ENCODE measurements at regions of chr16 and their contacts with region 1.

Region 1: DNA sequence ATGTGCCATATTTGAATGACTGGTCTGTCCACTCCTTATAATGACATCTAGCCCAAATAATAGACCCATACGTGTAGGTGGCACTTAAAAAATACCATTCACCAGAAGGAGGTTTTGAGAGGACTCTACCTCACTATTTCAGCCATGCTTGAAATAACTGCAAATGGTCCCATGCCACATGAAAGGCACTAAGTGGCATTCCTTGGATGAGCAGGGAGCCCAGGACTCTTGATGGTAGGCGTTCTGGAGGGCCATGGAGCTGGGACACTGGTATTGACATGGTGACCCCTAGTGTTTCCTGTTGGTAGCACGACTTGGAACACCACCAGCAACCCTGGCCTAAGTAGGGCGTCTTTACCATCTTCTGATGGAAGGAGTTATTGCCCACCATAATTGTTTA is 148.7 kb upstream of the ZFHX3 start:
- DNase-seq: peak; percentile 63 to 80
- ATAC-seq: peak; percentile 89 to 95 (median 90)
- H3K4me3 ChIP-seq: no peak overlapping the region
- H3K27ac ChIP-seq: no peak overlapping the region
- H3K4me1 ChIP-seq: no peaks in the 10 kb centered on the region
- H3K27me3 ChIP-seq: peaks cover 0 to 2% (median 0%) of the 10 kb centered on the region in 3 donors
- CTCF ChIP-seq: peak; percentile 75

Region 2: GRCh38 chr16:72501739-72502593 is 694.7 kb before region 1 on chr16:
- intact Hi-C with region 1: loop called (anchors 2 to 5 kb)
- DNase-seq: peak; percentile 42 to 57
- ATAC-seq: peak; percentile 49 to 87 (median 75)
- H3K4me3 ChIP-seq: no peak overlapping the region
- H3K27ac ChIP-seq: no peak overlapping the region
- H3K4me1 ChIP-seq: no peaks in the 10 kb centered on the region
- H3K27me3 ChIP-seq: no peaks in the 10 kb centered on the region
- CTCF ChIP-seq: peak; percentile 76

Region 3: DNA sequence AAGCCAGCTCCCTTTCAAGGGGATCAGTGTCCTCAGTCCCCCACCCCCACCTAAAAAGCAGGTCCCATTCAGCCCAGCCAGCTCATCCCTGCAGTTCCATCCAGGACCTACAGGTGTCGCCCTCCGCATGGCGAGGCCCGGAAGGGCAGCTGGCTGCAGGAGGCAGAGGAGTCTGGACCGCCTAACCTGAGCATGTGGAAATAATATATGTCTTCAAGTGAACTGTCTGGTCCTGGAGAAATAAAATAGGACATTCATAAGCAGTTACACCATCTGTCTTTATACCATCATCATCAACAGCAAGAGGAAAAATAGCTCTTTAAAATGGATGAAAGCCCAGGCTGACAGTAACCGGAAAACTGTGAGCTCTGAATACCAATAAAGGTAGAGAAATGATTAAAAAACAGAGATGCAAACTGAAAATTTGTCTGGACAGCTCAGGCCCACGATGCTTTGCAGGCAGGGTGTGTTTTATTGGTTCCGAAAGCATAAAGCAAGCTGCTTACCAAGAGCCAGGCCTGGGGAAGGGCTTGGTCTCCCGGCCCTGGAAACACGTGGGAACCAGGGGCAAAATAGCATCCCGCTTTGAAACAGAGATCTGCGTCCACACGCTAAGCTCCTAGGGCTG is 363.9 kb before region 1 on chr16:
- intact Hi-C with region 1: loop called (anchors 1 to 10 kb)
- DNase-seq: peak; percentile 89 to 93
- ATAC-seq: peak; percentile 90 to 95 (median 93)
- H3K4me3 ChIP-seq: no peak overlapping the region
- H3K27ac ChIP-seq: peak overlapping the region; percentile 47
- H3K4me1 ChIP-seq: peaks cover 9% of the 10 kb centered on the region
- H3K27me3 ChIP-seq: no peaks in the 10 kb centered on the region
- CTCF ChIP-seq: peak; percentile 96

Region 4: DNA sequence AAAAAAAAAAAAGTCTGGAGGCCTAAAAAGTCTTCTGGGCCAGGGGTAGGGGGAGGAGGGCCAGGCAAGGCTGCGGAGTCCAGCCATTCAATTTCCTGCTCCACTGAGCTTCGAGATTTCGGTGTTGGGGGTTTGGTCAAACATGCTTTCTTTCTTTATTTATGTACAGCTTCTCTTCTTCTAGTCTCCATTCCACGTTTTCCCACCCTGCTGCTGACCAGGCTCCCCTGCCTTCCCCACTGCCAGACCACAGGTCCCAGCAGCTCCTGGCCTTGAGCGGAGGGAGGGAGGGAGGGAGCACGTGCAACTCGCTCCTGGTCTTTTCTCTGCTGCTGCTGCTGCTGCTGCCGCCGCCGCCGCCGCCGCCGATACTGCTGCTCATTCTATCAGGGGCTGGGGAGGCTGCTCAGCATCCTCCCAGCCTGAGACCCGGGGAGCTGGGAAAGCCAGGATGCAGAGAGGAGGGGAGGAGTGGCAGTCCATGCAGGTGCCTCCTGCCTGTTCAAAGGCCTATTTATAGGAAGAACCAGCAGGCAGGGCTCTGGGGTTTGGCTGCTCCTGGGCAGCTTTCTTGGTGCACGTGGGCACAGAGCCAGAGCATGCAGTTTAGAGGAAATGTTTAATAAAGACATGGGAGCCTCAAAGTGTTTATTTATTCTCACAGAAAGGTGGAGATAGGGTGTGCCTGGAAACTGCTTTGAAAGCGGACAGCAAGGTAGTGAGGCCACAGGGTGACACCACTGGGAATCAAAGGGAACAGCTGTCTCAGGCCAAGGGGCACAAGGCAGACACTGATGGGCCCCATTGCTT is 125.3 kb before region 1 on chr16:
- intact Hi-C with region 1: loop called (anchors 5 kb)
- DNase-seq: peak; percentile 52 to 67
- ATAC-seq: peak in 3 of 4 donors; percentile 10 to 33 (median 18)
- H3K4me3 ChIP-seq: peak overlapping the region; percentile 51
- H3K27ac ChIP-seq: peak overlapping the region; percentile 98
- H3K4me1 ChIP-seq: peaks cover 43% of the 10 kb centered on the region
- H3K27me3 ChIP-seq: no peaks in the 10 kb centered on the region
- CTCF ChIP-seq: no peak

Measured in psoas muscle (tissue), 8 donors.